ENCODE measurements at regions of chr3 and their contacts with region 1.

Region 1: GRCh38 chr3:184298759-184299496 is at the start of gene PSMD2:
- DNase-seq: peak; percentile 94
- H3K4me3 Mint-ChIP-seq: peak within 1 kb of the TSS; percentile 92
- H3K27ac Mint-ChIP-seq: peak within 1 kb of the TSS; percentile 58
- H3K4me1 Mint-ChIP-seq: peaks cover 17% of the 10 kb centered on the region
- H3K27me3 Mint-ChIP-seq: peaks cover 2% of the 10 kb centered on the region
- total RNA-seq, gene PSMD2: 268 and 275 TPM in 2 replicates

Region 2: GRCh38 chr3:184117636-184118035 is 181.3 kb before region 1 on chr3:
- intact Hi-C with region 1: no loop called
- DNase-seq: no peak
- H3K4me3 Mint-ChIP-seq: no peak overlapping the region
- H3K27ac Mint-ChIP-seq: no peak overlapping the region
- H3K4me1 Mint-ChIP-seq: no peaks in the 10 kb centered on the region
- H3K27me3 Mint-ChIP-seq: peaks cover 11% of the 10 kb centered on the region

Region 3: GRCh38 chr3:184154885-184155643 is 143.9 kb before region 1 on chr3 and contains the start of gene DVL3:
- intact Hi-C with region 1: loop called (anchors 1 kb)
- DNase-seq: peak; percentile 49
- H3K4me3 Mint-ChIP-seq: peak within 1 kb of the TSS; percentile 96
- H3K27ac Mint-ChIP-seq: peak within 1 kb of the TSS; percentile 79
- H3K4me1 Mint-ChIP-seq: peaks cover 16% of the 10 kb centered on the region
- H3K27me3 Mint-ChIP-seq: no peaks in the 10 kb centered on the region
- total RNA-seq, gene DVL3: 53.8 and 56.1 TPM in 2 replicates

Region 4: GRCh38 chr3:184174646-184175492 is 124.1 kb before region 1 on chr3 and contains the start of gene AP2M1:
- intact Hi-C with region 1: loop called (anchors 1 kb)
- DNase-seq: peak; percentile 98
- H3K4me3 Mint-ChIP-seq: peak within 1 kb of the TSS; percentile 97
- H3K27ac Mint-ChIP-seq: peak within 1 kb of the TSS; percentile 82
- H3K4me1 Mint-ChIP-seq: peaks cover 17% of the 10 kb centered on the region
- H3K27me3 Mint-ChIP-seq: no peaks in the 10 kb centered on the region
- total RNA-seq, gene AP2M1: 234 and 240 TPM in 2 replicates

Region 5: DNA sequence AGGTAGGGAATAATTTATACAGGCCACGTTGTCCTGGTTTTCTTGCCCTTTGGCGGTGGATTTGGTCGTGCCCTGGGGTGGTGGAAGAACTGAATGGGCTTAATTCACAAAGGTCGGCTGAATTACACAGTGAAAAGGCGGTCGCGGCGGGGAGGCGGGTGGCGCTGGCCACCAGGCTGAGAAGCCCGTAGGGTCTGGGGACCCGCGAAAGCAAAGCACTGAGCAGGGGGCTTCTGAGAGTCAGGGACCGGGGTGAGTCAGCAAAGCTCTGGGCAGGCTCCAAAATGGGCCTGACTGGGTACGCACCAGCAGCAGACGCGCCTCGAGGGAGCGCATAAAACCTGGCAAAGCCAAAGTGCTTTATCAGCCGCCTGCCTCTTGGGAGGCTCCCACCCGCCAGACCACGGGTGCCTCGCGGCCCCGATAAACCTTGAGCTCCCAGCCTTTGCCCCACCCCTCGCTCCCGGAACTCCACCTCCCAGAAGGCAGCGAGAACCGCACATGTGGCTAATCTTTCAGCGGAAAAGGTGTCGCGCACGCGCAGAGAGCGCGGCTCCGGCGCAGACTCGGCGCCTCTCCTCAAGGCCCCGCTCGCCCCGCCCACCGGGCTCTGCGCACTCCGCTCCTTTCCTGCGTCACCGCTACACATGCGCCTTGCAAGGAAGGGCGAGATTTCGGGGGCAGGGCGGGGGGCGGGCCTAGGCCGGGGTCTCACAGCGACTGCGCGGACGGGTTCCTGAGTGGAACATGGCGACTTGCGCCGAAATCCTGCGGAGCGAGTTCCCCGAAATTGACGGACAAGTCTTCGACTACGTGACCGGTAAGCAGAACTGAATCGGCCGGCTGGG is 113.2 kb before region 1 on chr3 and contains the start of gene ABCF3:
- intact Hi-C with region 1: loop called (anchors 1 kb)
- DNase-seq: peak; percentile 99
- H3K4me3 Mint-ChIP-seq: peak within 1 kb of the TSS; percentile 94
- H3K27ac Mint-ChIP-seq: peak within 1 kb of the TSS; percentile 93
- H3K4me1 Mint-ChIP-seq: peaks cover 18% of the 10 kb centered on the region
- H3K27me3 Mint-ChIP-seq: no peaks in the 10 kb centered on the region
- total RNA-seq, gene ABCF3: 68.2 and 73.4 TPM in 2 replicates

Region 6: GRCh38 chr3:184314363-184314699 is 15.4 kb after region 1 on chr3 and contains the start of gene EIF4G1:
- intact Hi-C with region 1: loop called (anchors 1 kb)
- DNase-seq: peak; percentile 91
- H3K4me3 Mint-ChIP-seq: peak within 1 kb of the TSS; percentile 87
- H3K27ac Mint-ChIP-seq: peak within 1 kb of the TSS; percentile 86
- H3K4me1 Mint-ChIP-seq: peaks cover 22% of the 10 kb centered on the region
- H3K27me3 Mint-ChIP-seq: no peaks in the 10 kb centered on the region
- total RNA-seq, gene EIF4G1: 624 and 628 TPM in 2 replicates

Region 7: DNA sequence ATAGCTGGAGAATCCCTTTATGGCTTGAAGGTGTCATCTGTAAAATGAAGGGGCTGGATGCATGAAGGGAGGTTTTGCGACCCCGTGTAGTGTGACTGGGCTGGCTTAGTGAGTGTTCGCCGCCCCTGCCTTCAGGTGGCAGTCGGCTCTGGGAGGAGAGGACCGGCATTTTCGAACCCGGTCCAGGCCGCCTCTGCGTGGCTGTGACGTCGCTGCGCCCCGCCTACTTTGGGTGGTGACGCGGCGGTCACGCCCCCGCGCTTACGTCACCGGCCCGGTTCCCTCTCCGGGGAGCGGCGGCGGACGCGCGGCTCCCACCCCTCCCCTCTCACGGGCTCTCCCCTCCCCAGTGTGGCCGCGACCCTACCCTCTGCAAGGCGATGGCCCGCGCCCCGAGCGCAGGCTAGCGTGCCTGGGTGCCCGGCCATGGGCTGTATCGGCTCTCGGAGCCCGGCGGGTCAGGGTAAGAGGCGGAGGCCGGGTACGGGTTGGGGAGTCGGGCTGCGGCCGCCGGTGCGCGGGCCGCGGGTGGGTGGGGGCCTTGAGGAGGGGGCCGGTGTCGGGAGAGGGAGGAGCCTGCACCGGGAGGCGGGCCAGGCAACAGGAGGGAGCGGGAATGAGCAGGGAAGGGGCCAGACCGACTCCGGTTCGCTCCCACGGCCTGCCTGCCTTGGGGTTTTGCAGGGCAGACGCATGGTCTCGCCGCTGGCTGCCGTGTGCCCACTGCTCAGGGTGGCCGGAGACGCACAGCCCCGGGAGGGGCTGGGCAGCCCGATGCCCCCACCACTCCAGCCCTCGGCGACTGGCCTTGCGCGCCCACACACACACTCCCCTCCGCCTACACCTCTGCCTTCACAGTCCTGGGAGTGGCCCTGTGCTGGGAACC is 37.0 kb after region 1 on chr3:
- intact Hi-C with region 1: loop called (anchors 2 kb)
- DNase-seq: peak; percentile 81
- H3K4me3 Mint-ChIP-seq: peak overlapping the region; percentile 88
- H3K27ac Mint-ChIP-seq: peak overlapping the region; percentile 87
- H3K4me1 Mint-ChIP-seq: peaks cover 54% of the 10 kb centered on the region
- H3K27me3 Mint-ChIP-seq: no peaks in the 10 kb centered on the region

Measured in activated T-helper 2 cell treated with anti-CD3 and anti-CD28 coated beads, Interferon-gamma antibody, Interleukin-2, Interleukin-4, amounts not matched to agents 10 μg/mL and 5 μg/mL and 100 μg/mL, durations not matched to agents 14 hours and 24 hours and 36 hours (primary cell).